Left lung (tissue), 14 donors: ENCODE measurements at regions of chr17 and their contacts with region 1.

Region 1: DNA sequence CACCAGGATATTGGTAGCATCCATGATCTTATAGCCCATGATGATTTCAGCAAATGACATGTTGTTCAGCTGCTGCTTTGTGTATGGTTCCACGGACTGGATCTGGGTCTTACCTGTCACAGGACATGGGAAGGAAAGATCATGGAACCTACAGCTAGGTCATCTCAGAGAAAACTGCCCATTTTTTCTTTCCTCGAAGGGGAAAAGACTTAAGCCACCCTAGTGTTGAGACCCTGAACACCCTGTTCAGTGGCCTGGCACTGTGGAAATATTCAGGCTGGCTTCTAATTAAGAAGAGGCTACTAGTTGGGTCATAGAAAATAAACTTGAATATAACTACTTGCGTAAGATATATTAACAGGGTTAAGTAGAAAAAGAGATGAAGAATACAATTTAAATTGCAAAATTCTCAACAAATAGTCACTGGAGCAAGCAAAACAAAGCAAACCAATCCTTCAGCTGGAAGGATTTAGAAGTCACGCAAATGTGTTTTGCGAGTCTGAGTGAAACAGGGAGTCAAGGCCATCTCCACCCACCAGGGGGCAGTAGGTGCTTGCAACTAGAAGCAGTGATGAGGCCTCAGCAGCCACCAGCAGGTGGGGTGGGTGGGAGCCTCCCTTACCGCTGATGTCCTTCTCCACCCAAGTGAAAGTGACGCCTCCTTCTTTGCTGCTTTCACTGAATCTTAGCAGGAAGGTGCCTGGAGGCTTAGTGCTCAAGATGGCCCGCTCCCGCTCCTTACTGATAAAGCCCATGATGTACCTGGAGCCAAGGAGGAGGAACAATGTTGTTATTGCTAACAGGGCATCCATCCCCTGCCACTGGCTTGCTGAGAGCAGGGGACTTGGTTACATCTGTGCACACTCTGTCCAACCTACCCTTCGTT is 34.3 kb downstream of the STAT5A start:
- DNase-seq: peak; percentile 85 to 93 (median 91)
- ATAC-seq: peak; percentile 88
- H3K4me3 ChIP-seq: no peak overlapping the region
- H3K27ac ChIP-seq: peak overlapping the region in 1 of 2 donors; percentile 7
- H3K4me1 ChIP-seq: peaks cover 0 to 44% of the 10 kb centered on the region in 2 donors
- H3K27me3 ChIP-seq: no peaks in the 10 kb centered on the region
- CTCF ChIP-seq: peak; percentile 96 to 98

Region 2: DNA sequence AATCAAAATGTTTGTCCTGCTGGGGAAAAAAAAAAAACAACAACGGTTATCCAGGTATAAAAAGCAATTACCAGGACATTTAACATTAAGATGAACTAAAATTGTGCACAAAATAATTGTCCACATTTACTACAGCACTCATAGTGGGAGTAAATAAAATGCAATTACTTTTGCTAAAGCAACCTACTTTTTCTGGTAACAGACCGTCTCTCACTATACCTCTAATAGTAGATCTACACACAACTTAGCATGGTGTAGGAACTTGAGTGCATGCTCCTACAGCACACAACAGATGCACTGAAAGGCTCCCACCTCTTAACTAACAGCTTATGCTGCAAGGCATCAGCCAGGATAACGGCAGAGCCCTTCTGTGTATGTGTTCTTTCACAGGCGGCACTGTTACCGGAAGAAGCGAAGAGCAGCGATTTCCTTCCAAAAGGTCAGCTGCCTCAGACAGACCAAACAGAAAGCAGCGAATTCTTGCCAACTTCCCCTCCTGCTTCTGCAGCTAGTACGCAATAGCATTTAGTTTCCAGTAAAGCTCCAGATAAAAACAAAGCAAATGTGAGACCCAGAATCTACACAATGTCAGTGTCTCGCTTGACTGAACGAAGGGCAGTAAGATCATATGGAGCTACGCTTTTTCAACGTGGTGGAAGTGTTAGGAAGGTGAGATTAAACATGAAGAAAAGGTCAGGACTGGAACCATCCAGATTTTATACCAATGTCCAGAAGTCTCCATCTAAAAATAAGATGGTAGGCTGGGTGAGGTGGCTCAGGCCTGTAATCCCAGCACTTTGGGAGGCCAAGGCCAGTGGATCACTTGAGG is 74.1 kb before region 1 on chr17:
- intact Hi-C with region 1: no loop called
- DNase-seq: peak in 3 of 4 donors; percentile 84 to 95 (median 90)
- ATAC-seq: peak; percentile 95
- H3K4me3 ChIP-seq: peak overlapping the region; percentile 4 to 24
- H3K27ac ChIP-seq: peak overlapping the region; percentile 96
- H3K4me1 ChIP-seq: peaks cover 8 to 82% of the 10 kb centered on the region in 2 donors
- H3K27me3 ChIP-seq: no peaks in the 10 kb centered on the region
- CTCF ChIP-seq: no peak

Region 3: GRCh38 chr17:42405963-42406495 is 83.4 kb after region 1 on chr17:
- intact Hi-C with region 1: loop called (anchors 5 to 10 kb)
- DNase-seq: peak; percentile 73 to 96 (median 78)
- ATAC-seq: peak; percentile 67
- H3K4me3 ChIP-seq: no peak overlapping the region
- H3K27ac ChIP-seq: peak overlapping the region in 1 of 2 donors; percentile 74
- H3K4me1 ChIP-seq: peaks cover 46 to 83% of the 10 kb centered on the region in 2 donors
- H3K27me3 ChIP-seq: no peaks in the 10 kb centered on the region
- CTCF ChIP-seq: peak; percentile 80 to 89

Region 4: GRCh38 chr17:42438600-42439567 is 116.3 kb after region 1 on chr17:
- intact Hi-C with region 1: no loop called
- DNase-seq: peak in 1 of 4 donors; percentile 48
- ATAC-seq: peak; percentile 19
- H3K4me3 ChIP-seq: no peak overlapping the region
- H3K27ac ChIP-seq: no peak overlapping the region
- H3K4me1 ChIP-seq: peaks cover 3 to 18% of the 10 kb centered on the region in 2 donors
- H3K27me3 ChIP-seq: no peaks in the 10 kb centered on the region
- CTCF ChIP-seq: peak; percentile 25 to 29

Region 5: GRCh38 chr17:42527273-42527703 is 204.7 kb after region 1 on chr17:
- intact Hi-C with region 1: loop called in 1 of 2 experiments (anchors 5 kb)
- DNase-seq: peak in 3 of 4 donors; percentile 71 to 86 (median 71)
- ATAC-seq: peak; percentile 85
- H3K4me3 ChIP-seq: no peak overlapping the region
- H3K27ac ChIP-seq: no peak overlapping the region
- H3K4me1 ChIP-seq: peaks cover 14 to 46% of the 10 kb centered on the region in 2 donors
- H3K27me3 ChIP-seq: no peaks in the 10 kb centered on the region
- CTCF ChIP-seq: peak; percentile 77 to 79